ENCODE measurements at regions of chr12 and their contacts with region 1.

Region 1: DNA sequence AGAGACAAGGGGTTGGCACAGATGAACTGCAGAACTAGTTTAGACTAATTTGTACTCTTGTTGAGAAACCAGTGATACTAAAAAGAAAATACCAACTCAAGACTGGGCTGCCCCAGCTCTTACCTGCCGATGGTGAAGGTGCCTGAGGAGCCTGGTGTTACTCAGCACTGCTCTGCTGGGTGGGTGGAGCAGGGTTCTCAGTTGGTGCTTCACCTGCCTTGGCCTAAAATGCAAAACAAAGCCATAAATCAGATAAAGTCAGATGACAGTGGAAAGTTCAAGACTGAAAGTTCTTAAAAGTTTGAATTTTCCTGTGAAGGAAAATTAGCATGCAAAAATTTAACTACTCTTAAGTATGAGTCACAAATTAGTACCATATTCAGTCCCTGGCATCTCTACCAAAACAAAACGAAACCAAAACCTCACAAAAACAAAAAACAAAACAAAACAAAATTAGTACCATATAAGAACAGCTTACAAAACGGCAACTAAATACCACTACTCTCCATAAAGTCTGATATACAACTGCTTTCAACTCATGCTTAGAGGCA is 21.9 kb downstream of the YBX3 start:
- DNase-seq: peak; percentile 56
- H3K4me3 Mint-ChIP-seq: no peak overlapping the region
- H3K27ac Mint-ChIP-seq: peak overlapping the region; percentile 49
- H3K4me1 Mint-ChIP-seq: peaks cover 16% of the 10 kb centered on the region
- H3K27me3 Mint-ChIP-seq: no peaks in the 10 kb centered on the region

Region 2: DNA sequence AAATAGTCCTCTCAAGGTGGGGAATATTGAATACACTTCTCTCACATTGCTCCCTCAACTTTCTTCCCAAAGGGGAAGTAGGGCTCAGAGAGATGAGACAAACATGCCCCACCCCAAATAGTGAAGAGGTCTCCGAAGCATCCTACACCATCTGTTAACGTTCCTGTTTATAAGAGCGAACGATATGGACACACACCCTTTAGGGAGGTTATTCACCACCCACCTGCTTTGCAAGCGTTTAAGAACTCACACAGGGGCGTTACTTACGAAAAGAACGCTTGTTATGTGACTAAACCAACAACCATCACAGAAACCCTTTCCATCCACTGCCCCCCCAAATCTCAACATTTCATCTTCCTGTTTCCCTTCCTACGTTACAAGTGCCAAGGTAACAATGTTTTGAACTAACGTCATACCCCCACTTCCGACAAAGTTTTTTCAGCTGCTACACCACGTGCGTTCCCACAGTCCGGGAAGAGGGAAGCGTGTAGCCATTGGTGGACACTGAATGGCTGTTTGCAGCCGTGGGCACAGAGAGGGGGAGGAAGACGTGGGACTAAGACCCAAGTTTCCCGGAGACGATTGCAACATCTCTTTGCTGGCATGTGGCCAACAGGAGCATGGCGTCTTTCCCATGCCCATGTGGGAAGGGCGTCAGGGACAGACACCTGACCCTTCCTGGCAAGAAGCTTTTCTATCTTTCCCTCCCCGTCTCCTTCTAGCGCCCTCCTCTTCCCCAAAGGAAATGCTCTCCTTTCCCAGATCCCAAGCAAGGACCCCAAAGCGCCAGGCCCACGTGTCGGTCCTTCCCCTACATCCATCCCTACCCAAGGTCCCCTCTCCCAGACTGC is 20.7 kb after region 1 on chr12:
- CTCF ChIA-PET with region 1: no interaction called
- POLR2A ChIA-PET with region 1: no interaction called
- intact Hi-C with region 1: loop called (anchors 1 kb)
- DNase-seq: peak; percentile 69
- H3K4me3 Mint-ChIP-seq: peak overlapping the region; percentile 93
- H3K27ac Mint-ChIP-seq: peak overlapping the region; percentile 86
- H3K4me1 Mint-ChIP-seq: peaks cover 20% of the 10 kb centered on the region
- H3K27me3 Mint-ChIP-seq: peaks cover 53% of the 10 kb centered on the region